SK-N-SH (cell line): ENCODE measurements at regions of chr7 and their contacts with region 1.

Region 1: DNA sequence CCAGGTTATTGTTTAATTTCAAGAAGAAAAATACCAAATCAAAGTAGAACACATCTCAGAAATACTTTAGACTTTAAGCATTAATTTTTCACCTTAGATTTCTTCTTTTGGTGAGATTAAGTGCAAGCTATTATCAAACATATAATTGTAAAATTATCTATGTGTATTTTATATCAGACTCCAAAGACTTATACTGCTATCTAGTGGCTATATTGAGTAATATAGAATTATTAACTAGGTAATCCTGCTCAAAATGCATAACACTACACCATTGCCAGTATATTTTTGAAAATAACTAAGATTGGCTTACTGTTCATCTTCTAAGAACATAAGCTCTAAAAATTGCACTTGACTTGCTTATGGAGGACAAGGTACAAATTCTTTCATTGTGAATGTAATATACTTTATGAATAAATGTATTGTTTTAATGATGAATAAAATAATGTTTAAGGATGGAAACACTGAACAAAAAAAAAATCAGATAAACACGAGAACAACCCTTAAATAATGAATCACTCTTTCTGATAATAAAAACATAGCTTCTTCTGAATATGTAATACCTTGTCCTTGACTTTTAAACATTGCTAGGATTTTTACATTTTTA is 86.7 kb upstream of the GNAI1 start:
- DNase-seq: peak; percentile 39
- H3K4me3 ChIP-seq: no peak overlapping the region
- H3K27ac ChIP-seq: no peak overlapping the region
- H3K4me1 ChIP-seq: no peaks in the 10 kb centered on the region
- H3K27me3 ChIP-seq: no peaks in the 10 kb centered on the region
- CTCF ChIP-seq: peak; percentile 89
- EP300 ChIP-seq: no peak
- RAD21 ChIP-seq: peak; percentile 70

Region 2: GRCh38 chr7:79272066-79272669 is 775.8 kb before region 1 on chr7:
- CTCF ChIA-PET with region 1: interaction called, 14 read pairs
- POLR2A ChIA-PET with region 1: no interaction called
- DNase-seq: peak; percentile 41
- H3K4me3 ChIP-seq: no peak overlapping the region
- H3K27ac ChIP-seq: no peak overlapping the region
- H3K4me1 ChIP-seq: no peaks in the 10 kb centered on the region; a peak in 1 of 4 replicates
- H3K27me3 ChIP-seq: no peaks in the 10 kb centered on the region
- CTCF ChIP-seq: peak; percentile 94
- EP300 ChIP-seq: no peak
- RAD21 ChIP-seq: peak; percentile 78

Region 3: DNA sequence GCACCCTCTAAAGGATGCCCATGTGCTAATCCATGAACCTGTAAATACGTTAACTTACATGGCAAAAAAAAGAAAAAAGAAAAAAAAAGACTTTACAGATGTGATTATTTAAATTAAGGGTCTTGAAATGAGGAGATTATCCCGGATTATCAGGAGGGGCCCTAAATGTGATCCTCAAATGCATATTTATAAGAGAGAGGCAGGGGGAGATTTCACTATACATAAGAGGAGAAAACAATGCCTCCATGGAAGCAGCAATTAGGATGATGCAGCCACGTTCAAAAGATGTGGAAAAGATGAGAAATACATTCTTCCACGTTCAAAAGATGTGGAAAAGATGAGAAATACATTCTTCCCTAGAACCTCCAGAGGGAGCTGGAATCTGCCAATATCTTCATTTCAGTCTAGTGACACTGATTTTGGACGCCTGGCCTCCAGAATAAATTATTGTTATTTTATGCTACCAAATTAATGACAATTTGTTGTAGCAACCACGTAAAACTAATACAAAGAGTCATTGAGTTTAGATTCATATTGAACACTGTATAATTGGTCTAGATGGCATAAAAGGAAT is 241.7 kb before region 1 on chr7:
- CTCF ChIA-PET with region 1: interaction called, 20 read pairs
- POLR2A ChIA-PET with region 1: no interaction called
- DNase-seq: no peak
- H3K4me3 ChIP-seq: no peak overlapping the region
- H3K27ac ChIP-seq: no peak overlapping the region
- H3K4me1 ChIP-seq: no peaks in the 10 kb centered on the region; a peak in 2 of 4 replicates
- H3K27me3 ChIP-seq: no peaks in the 10 kb centered on the region
- CTCF ChIP-seq: peak; percentile 67
- EP300 ChIP-seq: no peak
- RAD21 ChIP-seq: peak; percentile 89

Region 4: DNA sequence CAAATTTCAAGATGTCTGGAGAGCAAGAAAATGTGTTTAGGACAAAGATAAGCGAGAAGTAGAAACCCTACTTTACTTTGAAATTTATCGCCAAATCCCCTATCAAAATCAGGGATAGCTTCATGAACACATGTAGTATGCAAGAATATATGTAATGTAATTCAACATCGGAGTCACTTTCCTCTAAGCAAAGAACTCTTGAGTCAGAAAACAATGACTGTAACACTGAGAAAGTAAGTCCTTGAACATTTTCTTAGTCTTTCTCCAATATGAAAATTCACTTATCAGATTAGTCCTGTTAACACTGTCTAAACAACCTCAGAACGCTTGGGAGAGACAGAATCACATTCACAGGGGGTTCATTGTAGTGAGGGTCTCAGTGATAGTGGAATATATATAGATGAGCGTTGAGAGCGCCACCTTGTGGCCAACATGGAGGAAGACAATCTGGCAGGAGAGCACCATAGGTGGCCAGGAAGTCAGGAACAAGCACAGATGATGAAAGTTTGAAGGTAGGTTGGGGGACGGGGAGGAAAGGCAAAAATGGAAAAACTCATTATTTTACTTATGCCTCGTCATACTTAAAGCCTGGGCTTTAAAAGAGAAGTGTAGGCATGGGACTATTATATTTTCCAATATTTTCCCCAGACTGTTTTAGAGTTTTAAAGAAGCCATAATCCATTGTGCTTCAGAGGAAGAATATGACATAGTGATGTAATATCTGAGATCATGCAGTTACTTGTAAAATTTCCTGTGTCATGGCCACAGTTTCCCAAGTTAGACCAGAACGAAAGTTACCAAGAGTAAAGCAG is 28.8 kb before region 1 on chr7:
- CTCF ChIA-PET with region 1: interaction called, 32 read pairs
- POLR2A ChIA-PET with region 1: no interaction called
- DNase-seq: peak; percentile 80
- H3K4me3 ChIP-seq: no peak overlapping the region
- H3K27ac ChIP-seq: peak overlapping the region in 1 of 2 experiments; percentile 23; a peak in 1 of 4 replicates
- H3K4me1 ChIP-seq: peaks cover 0 to 2% of the 10 kb centered on the region in 2 experiments; a peak in 2 of 4 replicates
- H3K27me3 ChIP-seq: no peaks in the 10 kb centered on the region
- CTCF ChIP-seq: peak; percentile 100
- EP300 ChIP-seq: no peak
- RAD21 ChIP-seq: peak; percentile 95

Region 5: DNA sequence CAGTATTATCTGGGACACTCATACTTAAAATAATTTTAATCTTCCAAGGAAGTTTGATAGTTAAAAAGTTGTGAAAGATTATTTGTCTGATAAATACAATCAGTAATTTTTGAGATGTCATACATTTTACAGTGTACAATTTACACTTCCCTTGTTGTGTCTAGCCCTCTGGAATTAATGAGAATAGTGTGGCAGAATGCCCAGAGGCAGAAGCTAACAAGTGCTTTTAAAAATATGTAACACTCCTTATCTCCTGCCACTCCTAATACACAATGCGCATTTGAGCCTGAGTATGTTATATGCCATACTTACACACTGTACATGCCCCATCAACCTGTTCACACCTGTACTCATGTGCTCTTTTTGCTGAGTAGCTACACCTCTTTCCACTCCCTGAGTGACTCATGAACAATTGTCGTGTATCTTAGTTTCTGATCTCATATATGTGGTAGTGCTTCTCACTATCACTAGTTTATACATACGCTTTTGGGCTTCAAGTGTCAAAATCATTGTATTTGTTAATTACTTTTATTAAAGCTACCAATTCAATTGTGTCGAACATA is 20.3 kb before region 1 on chr7:
- CTCF ChIA-PET with region 1: interaction called, 46 read pairs
- POLR2A ChIA-PET with region 1: no interaction called
- DNase-seq: no peak
- H3K4me3 ChIP-seq: no peak overlapping the region
- H3K27ac ChIP-seq: no peak overlapping the region
- H3K4me1 ChIP-seq: no peaks in the 10 kb centered on the region
- H3K27me3 ChIP-seq: no peaks in the 10 kb centered on the region
- CTCF ChIP-seq: no peak
- EP300 ChIP-seq: no peak
- RAD21 ChIP-seq: no peak